ENCODE measurements at regions of chr20 and their contacts with region 1.

Region 1: GRCh38 chr20:16801919-16802911 is 54.1 kb downstream of the OTOR start:
- DNase-seq: peak; percentile 60
- H3K4me3 ChIP-seq: no peak overlapping the region
- H3K27ac ChIP-seq: no peak overlapping the region
- H3K4me1 ChIP-seq: no peaks in the 10 kb centered on the region
- CTCF ChIP-seq: peak; percentile 93

Region 2: GRCh38 chr20:16771213-16771612 is 31.0 kb before region 1 on chr20:
- CTCF ChIA-PET with region 1: no interaction called
- POLR2A ChIA-PET with region 1: no interaction called
- intact Hi-C with region 1: no loop called
- DNase-seq: no peak
- H3K4me3 ChIP-seq: no peak overlapping the region
- H3K27ac ChIP-seq: no peak overlapping the region
- H3K4me1 ChIP-seq: no peaks in the 10 kb centered on the region
- CTCF ChIP-seq: no peak

Region 3: GRCh38 chr20:16821211-16822089 is 19.2 kb after region 1 on chr20:
- CTCF ChIA-PET with region 1: no interaction called
- POLR2A ChIA-PET with region 1: interaction called, 4 read pairs
- intact Hi-C with region 1: loop called (anchors 2 kb)
- DNase-seq: peak; percentile 57
- H3K4me3 ChIP-seq: no peak overlapping the region
- H3K27ac ChIP-seq: no peak overlapping the region
- H3K4me1 ChIP-seq: no peaks in the 10 kb centered on the region
- CTCF ChIP-seq: peak; percentile 94

Region 4: GRCh38 chr20:17281478-17281877 is 479.3 kb after region 1 on chr20:
- CTCF ChIA-PET with region 1: no interaction called
- POLR2A ChIA-PET with region 1: no interaction called
- intact Hi-C with region 1: loop called (anchors 2 kb)
- DNase-seq: peak; percentile 34
- H3K4me3 ChIP-seq: no peak overlapping the region
- H3K27ac ChIP-seq: no peak overlapping the region
- H3K4me1 ChIP-seq: no peaks in the 10 kb centered on the region
- CTCF ChIP-seq: peak; percentile 77

Region 5: DNA sequence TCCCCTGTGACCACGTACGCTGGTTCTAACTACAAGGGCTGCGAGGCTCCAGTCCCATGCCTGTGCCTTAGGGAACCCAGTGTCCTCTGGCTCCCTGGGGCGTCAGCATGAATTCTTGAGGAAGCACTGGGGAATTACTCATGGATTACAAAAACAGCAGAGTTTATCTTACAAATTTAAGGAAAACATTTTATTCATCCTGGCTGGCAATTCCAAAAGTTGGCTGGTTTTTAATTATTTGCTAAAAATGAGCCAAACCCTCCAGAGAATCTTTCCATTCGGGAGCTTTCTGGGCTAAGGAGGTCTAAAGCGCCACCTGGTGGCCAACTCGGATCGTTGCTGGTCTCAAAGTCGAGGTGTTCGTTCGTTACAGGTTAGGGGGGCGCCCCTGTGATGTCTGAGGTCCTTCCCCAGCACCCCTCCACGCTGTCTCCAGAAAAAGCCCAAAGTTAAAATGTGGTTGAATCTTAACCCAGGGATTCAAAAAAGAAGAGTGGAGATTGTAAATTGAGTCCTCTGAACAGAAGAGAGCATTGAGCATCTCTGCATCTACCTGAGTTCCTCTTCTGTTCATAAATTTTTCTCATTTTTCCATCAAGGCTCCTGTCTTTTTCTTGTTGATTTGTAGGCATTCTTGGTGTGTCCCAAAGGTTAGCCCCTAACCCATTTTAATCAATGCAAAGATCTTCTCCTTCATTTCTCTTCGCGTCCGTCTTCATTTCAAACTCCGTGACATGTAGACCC is 629.6 kb after region 1 on chr20:
- CTCF ChIA-PET with region 1: no interaction called
- POLR2A ChIA-PET with region 1: interaction called, 4 read pairs
- intact Hi-C with region 1: loop called (anchors 1 kb)
- DNase-seq: peak; percentile 60
- H3K4me3 ChIP-seq: no peak overlapping the region
- H3K27ac ChIP-seq: no peak overlapping the region
- H3K4me1 ChIP-seq: no peaks in the 10 kb centered on the region
- CTCF ChIP-seq: peak; percentile 98

Measured in OCI-LY7 (cell line).